ENCODE measurements at regions of chr22 and their contacts with region 1.

Region 1: DNA sequence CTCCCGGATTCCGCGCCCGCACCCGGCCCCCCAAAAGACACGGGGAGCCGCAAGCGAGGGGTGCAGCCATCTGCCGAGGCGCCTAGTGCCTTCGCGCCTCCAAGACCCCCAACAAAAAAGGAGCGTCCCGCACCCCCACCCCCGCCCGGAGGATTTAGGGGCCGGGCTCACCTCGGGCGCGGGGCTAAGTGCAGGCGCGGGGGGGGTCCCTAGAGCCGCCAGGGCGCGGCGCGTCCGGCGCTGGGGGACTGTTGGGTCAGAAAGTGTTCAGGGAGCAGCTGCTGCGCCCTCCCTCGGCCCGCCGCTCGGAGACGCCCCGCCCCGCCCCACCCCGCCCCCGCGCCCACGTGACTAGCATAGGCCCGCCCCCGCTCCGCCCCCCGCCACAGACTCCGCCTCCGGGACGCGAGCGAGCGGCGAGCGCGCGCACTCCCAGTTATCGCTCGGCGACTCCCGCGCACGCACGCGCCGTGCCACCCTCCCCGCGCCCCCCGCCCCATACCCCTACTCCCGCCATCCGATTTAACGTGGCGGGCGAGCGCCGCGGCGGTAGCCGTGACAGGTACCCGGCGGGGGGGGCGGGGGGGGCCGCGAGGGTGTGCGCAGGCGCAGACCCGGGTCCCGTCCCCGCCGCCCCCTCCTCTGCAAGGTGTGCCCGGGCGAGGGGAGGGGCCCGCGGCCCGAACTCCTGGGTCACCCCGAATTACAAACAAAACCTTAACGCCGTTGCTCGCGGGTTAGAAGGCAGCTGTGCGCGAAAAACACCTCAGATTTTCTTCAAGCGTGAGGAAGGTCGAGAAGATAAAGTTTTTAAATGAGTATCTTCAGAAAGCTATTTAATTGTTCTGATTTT is 56.2 kb downstream of the KCNJ4 start:
- DNase-seq: peak; percentile 95

Region 2: DNA sequence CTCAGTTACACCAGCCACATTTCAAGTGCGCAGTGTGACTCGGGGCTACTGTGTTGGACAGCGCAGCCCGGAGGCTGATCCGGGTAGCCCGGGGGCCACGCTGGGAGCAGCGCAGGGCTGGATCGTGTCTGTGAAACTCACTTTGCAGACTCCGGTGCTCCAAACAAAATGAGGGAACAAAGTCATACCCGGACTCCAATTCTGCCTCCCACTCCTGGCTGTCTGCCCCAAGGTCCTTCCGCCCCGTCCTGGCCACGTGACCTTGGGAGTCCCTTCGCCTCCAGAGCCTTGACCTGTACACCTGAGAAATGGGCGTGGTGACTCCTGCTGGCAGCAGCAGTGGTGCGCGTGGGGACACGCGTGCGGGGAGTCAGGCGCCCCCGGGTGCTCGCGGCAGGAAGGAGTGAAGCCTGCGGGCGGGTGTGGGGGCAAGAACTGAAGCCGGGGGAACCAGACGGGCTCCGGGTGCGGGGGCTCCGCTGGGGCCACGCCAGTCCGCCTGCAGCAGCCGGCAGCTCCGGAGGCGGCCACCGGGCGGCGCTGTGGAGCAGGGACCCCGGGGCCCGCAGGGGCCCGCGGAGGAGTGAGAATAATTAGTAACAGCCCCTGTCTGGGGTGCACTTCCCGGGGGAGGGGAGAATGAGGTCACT is 13.7 kb after region 1 on chr22:
- CTCF ChIA-PET with region 1: interaction called, 10 read pairs
- POLR2A ChIA-PET with region 1: interaction called, 4 read pairs
- DNase-seq: peak; percentile 94

Region 3: DNA sequence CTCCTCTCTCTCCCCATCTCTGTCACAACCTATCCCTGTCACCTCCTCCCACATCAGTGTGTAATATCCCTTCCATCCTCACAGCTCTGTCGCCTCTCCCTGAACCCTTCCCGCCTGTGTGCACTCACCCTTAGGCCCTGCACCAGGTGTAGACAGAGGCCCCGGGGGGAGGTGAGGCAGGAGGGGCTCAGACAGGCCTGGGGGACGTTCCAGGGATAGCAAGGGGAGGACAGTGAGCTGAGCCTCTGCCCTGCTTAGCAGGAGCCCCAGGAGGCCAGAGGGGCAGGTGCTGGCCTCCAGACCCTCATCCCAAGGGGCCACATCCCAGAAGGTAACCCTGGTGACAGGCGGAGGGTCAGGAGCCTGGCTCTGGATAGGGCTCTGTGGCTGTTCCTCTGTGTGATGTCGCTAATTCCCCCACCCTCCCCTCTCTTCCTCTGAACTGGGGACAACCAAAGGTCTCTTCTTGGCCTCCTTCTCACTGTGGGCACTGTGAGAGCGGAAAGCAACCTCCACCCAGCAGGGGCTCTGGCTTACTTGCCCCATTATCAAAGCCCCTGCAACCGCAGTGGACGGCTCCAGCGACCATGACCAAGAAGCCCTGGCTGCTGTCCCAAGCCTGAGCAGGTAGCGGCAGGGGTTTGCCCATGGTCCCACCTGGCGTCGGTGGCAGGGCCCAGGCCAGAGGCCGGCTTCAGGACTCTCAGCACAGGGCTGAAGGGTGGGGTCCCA is 20.5 kb after region 1 on chr22:
- CTCF ChIA-PET with region 1: interaction called, 4 read pairs
- POLR2A ChIA-PET with region 1: interaction called, 10 read pairs
- DNase-seq: no peak